Tibial artery (tissue), 4 donors: ENCODE measurements at regions of chr10 and their contacts with region 1.

Region 1: DNA sequence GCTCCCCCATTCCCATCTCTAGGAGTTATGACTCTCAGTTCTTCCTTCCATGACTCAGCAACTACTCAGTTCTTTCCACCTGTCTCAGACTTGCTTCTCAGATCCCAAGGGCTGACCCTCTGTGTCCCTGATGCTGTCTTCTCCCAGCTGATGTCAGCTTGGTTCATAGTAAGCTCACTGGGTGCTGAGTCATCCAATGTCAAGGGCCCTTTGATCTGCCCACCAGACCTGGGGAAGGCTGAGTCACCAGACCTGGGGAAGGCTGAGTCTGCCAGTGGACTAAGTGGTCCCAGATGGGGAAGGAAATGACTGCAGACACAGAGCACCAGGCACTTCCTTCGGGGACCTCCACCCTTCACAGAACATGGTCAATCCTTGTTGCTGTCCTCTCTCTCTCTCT is 76.1 kb upstream of the ZEB1 start:
- DNase-seq: no peak
- H3K4me3 ChIP-seq: no peak overlapping the region
- H3K27ac ChIP-seq: no peak overlapping the region
- H3K4me1 ChIP-seq: no peaks in the 10 kb centered on the region
- H3K27me3 ChIP-seq: no peaks in the 10 kb centered on the region
- CTCF ChIP-seq: no peak

Region 2: DNA sequence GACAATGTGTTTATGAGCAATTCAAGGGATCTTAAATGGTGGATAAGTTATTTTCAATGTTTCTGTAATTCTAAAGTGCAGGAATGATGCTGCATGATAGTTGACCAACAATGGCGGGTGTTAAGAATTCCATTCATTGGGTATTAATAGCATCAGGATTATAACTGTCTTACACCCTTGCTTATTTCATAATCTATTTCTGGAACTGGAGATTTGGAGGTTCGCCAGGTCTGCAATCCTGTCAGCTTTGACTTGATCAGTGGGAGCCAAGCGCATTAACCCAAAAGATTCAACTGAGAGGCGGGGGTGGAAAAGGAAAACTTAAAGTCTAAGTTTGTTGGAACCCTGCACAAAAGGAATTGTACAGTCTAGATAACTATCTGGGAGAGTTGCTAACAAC is 38.8 kb before region 1 on chr10:
- intact Hi-C with region 1: no loop called
- DNase-seq: peak in 1 of 2 donors; percentile 48
- H3K4me3 ChIP-seq: no peak overlapping the region
- H3K27ac ChIP-seq: no peak overlapping the region
- H3K4me1 ChIP-seq: peaks cover 0 to 10% (median 4%) of the 10 kb centered on the region in 4 donors
- H3K27me3 ChIP-seq: no peaks in the 10 kb centered on the region
- CTCF ChIP-seq: no peak

Region 3: GRCh38 chr10:31219306-31219705 is 23.6 kb before region 1 on chr10:
- intact Hi-C with region 1: loop called (anchors 2 kb)
- DNase-seq: no peak
- H3K4me3 ChIP-seq: no peak overlapping the region
- H3K27ac ChIP-seq: no peak overlapping the region
- H3K4me1 ChIP-seq: no peaks in the 10 kb centered on the region
- H3K27me3 ChIP-seq: no peaks in the 10 kb centered on the region
- CTCF ChIP-seq: no peak

Region 4: DNA sequence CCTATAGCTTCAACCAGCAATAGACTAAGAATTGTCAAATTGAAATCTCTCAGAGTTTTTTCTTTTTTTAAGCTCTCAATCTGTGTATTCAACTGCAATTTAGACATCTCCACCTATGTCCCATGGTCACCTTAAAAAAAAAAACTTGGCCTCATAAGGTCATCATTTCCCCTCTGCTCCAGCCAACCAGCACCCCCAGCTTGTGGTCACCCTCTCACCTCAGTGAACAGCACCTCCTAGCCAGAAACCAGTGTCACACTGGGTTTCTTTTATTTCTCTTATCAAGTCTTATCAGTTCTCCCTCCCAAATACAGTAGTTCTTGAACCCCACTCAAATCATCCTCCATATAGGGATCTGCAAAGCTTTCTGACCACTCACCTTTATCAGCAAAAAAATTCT is 1711.2 kb after region 1 on chr10:
- intact Hi-C with region 1: loop called (anchors 5 kb)
- DNase-seq: no peak
- H3K4me3 ChIP-seq: no peak overlapping the region
- H3K27ac ChIP-seq: peak overlapping the region; percentile 11 to 95
- H3K4me1 ChIP-seq: peaks cover 0 to 72% (median 32%) of the 10 kb centered on the region in 4 donors
- H3K27me3 ChIP-seq: no peaks in the 10 kb centered on the region
- CTCF ChIP-seq: no peak